Mammary epithelial cell (primary cell): ENCODE measurements at regions of chr10 and their contacts with region 1.

Region 1: GRCh38 chr10:68988530-68989316 is at the start of gene KIFBP:
- DNase-seq: peak; percentile 96
- H3K4me3 ChIP-seq: peak within 1 kb of the TSS; percentile 70 to 83 (median 79)
- H3K27ac ChIP-seq: peak within 1 kb of the TSS; percentile 73
- H3K4me1 ChIP-seq: peaks cover 28% of the 10 kb centered on the region
- H3K27me3 ChIP-seq: no peaks in the 10 kb centered on the region
- CTCF ChIP-seq: peak; percentile 16 to 64
- total RNA-seq, gene KIFBP: 36.0 to 39.3 TPM

Region 2: GRCh38 chr10:69179743-69180524 is 191.2 kb after region 1 on chr10 and contains the start of gene SUPV3L1:
- CTCF ChIA-PET with region 1: no interaction called
- dilution Hi-C with region 1: no loop called
- in situ Hi-C with region 1: no loop called
- intact Hi-C with region 1: loop called (anchors 5 kb)
- DNase-seq: peak; percentile 91
- H3K4me3 ChIP-seq: peak within 1 kb of the TSS; percentile 75 to 98 (median 88)
- H3K27ac ChIP-seq: peak within 1 kb of the TSS; percentile 99
- H3K4me1 ChIP-seq: peaks cover 7% of the 10 kb centered on the region
- H3K27me3 ChIP-seq: no peaks in the 10 kb centered on the region
- CTCF ChIP-seq: no peak
- total RNA-seq, gene SUPV3L1: 26.8 to 36.7 TPM

Region 3: GRCh38 chr10:69217119-69217754 is 228.5 kb after region 1 on chr10:
- CTCF ChIA-PET with region 1: no interaction called
- dilution Hi-C with region 1: no loop called
- in situ Hi-C with region 1: no loop called
- intact Hi-C with region 1: loop called (anchors 1 kb)
- DNase-seq: peak; percentile 91
- H3K4me3 ChIP-seq: no peak overlapping the region
- H3K27ac ChIP-seq: peak overlapping the region; percentile 72
- H3K4me1 ChIP-seq: peaks cover 29% of the 10 kb centered on the region
- H3K27me3 ChIP-seq: no peaks in the 10 kb centered on the region
- CTCF ChIP-seq: no peak

Region 4: GRCh38 chr10:69392481-69393000 is 403.8 kb after region 1 on chr10:
- CTCF ChIA-PET with region 1: no interaction called
- dilution Hi-C with region 1: no loop called
- in situ Hi-C with region 1: no loop called
- intact Hi-C with region 1: loop called (anchors 5 kb)
- DNase-seq: peak; percentile 66
- H3K4me3 ChIP-seq: no peak overlapping the region
- H3K27ac ChIP-seq: no peak overlapping the region
- H3K4me1 ChIP-seq: peaks cover 6% of the 10 kb centered on the region
- H3K27me3 ChIP-seq: no peaks in the 10 kb centered on the region
- CTCF ChIP-seq: peak; percentile 92 to 99